Heart right ventricle (tissue), 16 donors: ENCODE measurements at regions of chr2 and their contacts with region 1.

Region 1: DNA sequence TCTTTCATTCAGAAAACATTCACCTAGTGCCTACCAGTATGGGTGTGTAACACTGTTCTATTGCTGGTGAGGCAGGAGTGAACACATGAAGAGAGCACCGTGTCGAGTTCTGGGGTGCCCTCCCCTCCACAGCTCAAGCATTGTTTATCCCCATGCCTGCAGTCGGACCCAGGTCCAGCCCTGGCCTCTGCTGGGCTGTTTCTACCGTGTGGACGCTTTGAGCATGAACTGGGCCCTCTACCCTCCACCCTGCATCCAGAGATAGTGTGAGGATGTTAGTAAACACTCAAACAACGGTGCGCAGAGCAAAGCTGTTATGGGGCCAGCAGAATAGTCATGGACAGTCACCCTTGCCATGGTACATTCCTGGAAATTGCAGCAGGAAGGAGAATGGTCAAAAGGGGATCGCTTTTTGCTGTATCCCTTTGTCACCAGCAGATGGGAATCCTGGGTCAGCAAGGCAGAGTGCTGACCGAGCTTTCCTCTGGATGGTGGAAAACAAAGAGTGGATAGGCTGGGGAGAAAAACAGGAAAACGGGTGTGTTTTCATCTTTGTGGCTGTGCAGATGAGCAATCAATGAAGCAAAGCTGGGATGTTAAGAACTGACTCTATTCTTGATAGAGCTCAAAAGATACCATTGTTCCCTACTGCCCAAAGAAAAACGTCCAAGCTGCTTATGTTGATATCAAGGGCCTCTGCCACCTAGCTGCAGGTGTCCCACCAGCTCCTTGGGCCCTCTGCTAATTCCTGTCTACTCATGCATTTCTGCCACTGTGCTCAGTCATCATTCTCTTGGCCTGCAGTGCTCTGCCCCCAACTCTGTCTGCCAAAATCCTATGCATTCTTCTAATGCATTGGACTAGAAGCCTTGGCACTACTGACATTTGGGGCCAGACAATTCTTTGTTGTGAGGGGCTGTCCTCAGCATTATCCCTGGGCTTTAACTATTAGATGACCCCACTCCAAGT is 38.7 kb downstream of the REEP1 start:
- DNase-seq: peak in 1 of 2 donors; percentile 28
- ATAC-seq: peak; percentile 54 to 82 (median 71)
- H3K4me3 ChIP-seq: no peak overlapping the region
- H3K27ac ChIP-seq: peak overlapping the region in 8 of 10 donors; percentile 16 to 52 (median 34)
- H3K4me1 ChIP-seq: peaks cover 9 to 62% (median 44%) of the 10 kb centered on the region in 9 donors
- H3K27me3 ChIP-seq: no peaks in the 10 kb centered on the region
- CTCF ChIP-seq: peak; percentile 23 to 71 (median 52)

Region 2: DNA sequence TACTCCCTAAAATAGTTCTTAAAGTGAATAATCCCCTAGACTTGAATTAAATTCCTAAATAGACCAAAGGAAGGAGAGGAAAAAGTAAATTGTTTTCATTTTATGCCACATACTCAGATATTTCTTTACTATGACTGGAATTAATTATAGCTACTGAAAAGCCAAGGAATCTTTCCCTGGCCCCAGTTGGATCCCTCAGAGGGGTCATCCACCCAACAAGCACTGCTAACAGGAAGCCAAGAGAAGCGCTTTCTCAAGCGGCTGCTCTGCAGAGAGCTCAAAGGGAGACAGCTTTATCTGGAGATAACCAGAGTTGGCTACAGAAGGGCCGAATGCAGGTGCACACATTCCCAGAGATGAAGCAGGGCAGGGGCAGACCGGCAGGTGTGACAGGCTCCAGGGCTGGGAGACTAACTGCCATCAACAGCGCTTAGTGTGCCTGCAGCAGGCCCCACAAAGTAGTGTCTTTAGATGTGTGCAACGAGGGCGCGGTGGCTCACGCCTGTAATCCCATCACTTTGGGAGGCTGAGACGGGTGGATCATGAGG is 244.1 kb before region 1 on chr2:
- intact Hi-C with region 1: no loop called
- DNase-seq: no peak
- ATAC-seq: no peak
- H3K4me3 ChIP-seq: no peak overlapping the region
- H3K27ac ChIP-seq: no peak overlapping the region
- H3K4me1 ChIP-seq: peaks cover 0 to 5% (median 0%) of the 10 kb centered on the region in 9 donors
- H3K27me3 ChIP-seq: no peaks in the 10 kb centered on the region
- CTCF ChIP-seq: no peak

Region 3: GRCh38 chr2:86274918-86275275 is 23.8 kb before region 1 on chr2:
- intact Hi-C with region 1: loop called in 1 of 10 experiments (anchors 2 kb)
- DNase-seq: peak; percentile 51 to 72
- ATAC-seq: peak; percentile 63 to 87 (median 80)
- H3K4me3 ChIP-seq: no peak overlapping the region
- H3K27ac ChIP-seq: peak overlapping the region in 1 of 10 donors; percentile 9
- H3K4me1 ChIP-seq: peaks cover 2 to 29% (median 19%) of the 10 kb centered on the region in 9 donors
- H3K27me3 ChIP-seq: no peaks in the 10 kb centered on the region
- CTCF ChIP-seq: no peak